IMR-90 (cell line): ENCODE measurements at regions of chr17 and their contacts with region 1.

Region 1: GRCh38 chr17:61376931-61377838 is 22.5 kb upstream of the TBX2 start:
- DNase-seq: no peak
- ATAC-seq: no peak
- H3K4me3 ChIP-seq: no peak overlapping the region
- H3K27ac ChIP-seq: no peak overlapping the region
- H3K4me1 ChIP-seq: peaks cover 4% of the 10 kb centered on the region; the same call in 1 of the 2 replicates
- H3K27me3 ChIP-seq: no peaks in the 10 kb centered on the region
- CTCF ChIP-seq: no peak
- POLR2A ChIP-seq: no peak
- RAD21 ChIP-seq: no peak

Region 2: GRCh38 chr17:60750640-60751039 is 626.5 kb before region 1 on chr17:
- CTCF ChIA-PET with region 1: no interaction called
- POLR2A ChIA-PET with region 1: no interaction called
- dilution Hi-C with region 1: no loop called
- in situ Hi-C with region 1: no loop called
- intact Hi-C with region 1: no loop called
- DNase-seq: no peak
- ATAC-seq: no peak
- H3K4me3 ChIP-seq: no peak overlapping the region
- H3K27ac ChIP-seq: no peak overlapping the region
- H3K4me1 ChIP-seq: no peaks in the 10 kb centered on the region
- H3K27me3 ChIP-seq: no peaks in the 10 kb centered on the region
- CTCF ChIP-seq: no peak
- POLR2A ChIP-seq: no peak
- RAD21 ChIP-seq: no peak

Region 3: GRCh38 chr17:61058466-61058865 is 318.7 kb before region 1 on chr17:
- CTCF ChIA-PET with region 1: no interaction called
- POLR2A ChIA-PET with region 1: interaction called, 13 read pairs
- dilution Hi-C with region 1: no loop called
- in situ Hi-C with region 1: no loop called
- intact Hi-C with region 1: no loop called
- DNase-seq: no peak
- ATAC-seq: no peak
- H3K4me3 ChIP-seq: no peak overlapping the region
- H3K27ac ChIP-seq: no peak overlapping the region
- H3K4me1 ChIP-seq: no peaks in the 10 kb centered on the region
- H3K27me3 ChIP-seq: no peaks in the 10 kb centered on the region
- CTCF ChIP-seq: no peak
- POLR2A ChIP-seq: no peak
- RAD21 ChIP-seq: no peak

Region 4: GRCh38 chr17:61451538-61452300 is 74.5 kb after region 1 on chr17:
- CTCF ChIA-PET with region 1: no interaction called
- POLR2A ChIA-PET with region 1: no interaction called
- dilution Hi-C with region 1: no loop called
- in situ Hi-C with region 1: no loop called
- intact Hi-C with region 1: no loop called
- DNase-seq: no peak
- ATAC-seq: no peak
- H3K4me3 ChIP-seq: no peak overlapping the region
- H3K27ac ChIP-seq: no peak overlapping the region
- H3K4me1 ChIP-seq: no peaks in the 10 kb centered on the region
- H3K27me3 ChIP-seq: peaks cover 78% of the 10 kb centered on the region
- CTCF ChIP-seq: no peak
- POLR2A ChIP-seq: no peak
- RAD21 ChIP-seq: no peak